ENCODE measurements at regions of chr9 and their contacts with region 1.

Region 1: DNA sequence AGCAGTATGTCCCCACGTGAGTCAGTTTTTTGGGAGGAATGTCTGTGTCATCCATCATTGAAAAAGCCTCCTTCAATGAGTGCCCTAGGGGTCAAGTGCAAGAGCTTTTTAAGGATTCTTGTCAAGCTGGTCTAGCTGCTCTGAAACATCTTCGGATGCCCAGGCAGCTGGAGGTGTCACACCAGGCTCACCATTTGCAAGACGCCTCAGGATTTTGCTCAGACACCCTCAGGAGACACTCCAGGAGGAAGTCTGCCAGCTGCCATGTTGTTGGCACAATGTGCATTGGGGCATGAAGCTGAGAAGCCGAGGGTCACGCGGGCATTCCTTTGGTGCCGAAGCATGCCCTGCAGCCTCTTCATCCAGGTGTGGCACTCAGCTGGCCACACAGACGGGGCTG is 111.1 kb upstream of the S1PR3 start:
- DNase-seq: peak; percentile 77 to 85
- H3K4me3 ChIP-seq: no peak overlapping the region
- H3K27ac ChIP-seq: no peak overlapping the region
- H3K4me1 ChIP-seq: peaks cover 6% of the 10 kb centered on the region; the same call in 1 of the 2 replicates
- H3K27me3 ChIP-seq: no peaks in the 10 kb centered on the region
- CTCF ChIP-seq: no peak

Region 2: DNA sequence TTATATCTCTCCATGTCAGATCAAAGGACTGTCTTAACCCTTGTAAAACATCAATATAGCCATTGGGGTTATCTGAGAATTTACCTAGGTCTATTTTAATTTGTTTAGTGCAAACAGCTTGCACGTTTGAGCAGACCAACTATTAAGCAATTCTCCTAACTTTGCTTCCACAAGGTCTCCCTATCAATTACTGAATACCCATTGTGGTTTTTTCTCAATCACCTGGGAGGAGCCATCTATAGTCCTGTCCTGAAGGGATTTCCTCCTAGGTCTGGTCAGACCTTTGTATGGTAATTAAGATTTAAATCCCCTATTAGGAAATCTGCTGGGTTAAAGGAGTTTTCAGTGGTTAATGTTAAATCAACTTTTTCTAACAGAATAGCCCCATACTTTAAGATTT is 62.2 kb after region 1 on chr9:
- CTCF ChIA-PET with region 1: no interaction called
- POLR2A ChIA-PET with region 1: no interaction called
- intact Hi-C with region 1: loop called (anchors 5 kb)
- DNase-seq: peak in 1 of 2 experiments; percentile 72
- H3K4me3 ChIP-seq: no peak overlapping the region
- H3K27ac ChIP-seq: peak overlapping the region; percentile 72
- H3K4me1 ChIP-seq: peaks cover 77% of the 10 kb centered on the region
- H3K27me3 ChIP-seq: no peaks in the 10 kb centered on the region
- CTCF ChIP-seq: no peak